ENCODE measurements at regions of chr14 and their contacts with region 1.

Region 1: DNA sequence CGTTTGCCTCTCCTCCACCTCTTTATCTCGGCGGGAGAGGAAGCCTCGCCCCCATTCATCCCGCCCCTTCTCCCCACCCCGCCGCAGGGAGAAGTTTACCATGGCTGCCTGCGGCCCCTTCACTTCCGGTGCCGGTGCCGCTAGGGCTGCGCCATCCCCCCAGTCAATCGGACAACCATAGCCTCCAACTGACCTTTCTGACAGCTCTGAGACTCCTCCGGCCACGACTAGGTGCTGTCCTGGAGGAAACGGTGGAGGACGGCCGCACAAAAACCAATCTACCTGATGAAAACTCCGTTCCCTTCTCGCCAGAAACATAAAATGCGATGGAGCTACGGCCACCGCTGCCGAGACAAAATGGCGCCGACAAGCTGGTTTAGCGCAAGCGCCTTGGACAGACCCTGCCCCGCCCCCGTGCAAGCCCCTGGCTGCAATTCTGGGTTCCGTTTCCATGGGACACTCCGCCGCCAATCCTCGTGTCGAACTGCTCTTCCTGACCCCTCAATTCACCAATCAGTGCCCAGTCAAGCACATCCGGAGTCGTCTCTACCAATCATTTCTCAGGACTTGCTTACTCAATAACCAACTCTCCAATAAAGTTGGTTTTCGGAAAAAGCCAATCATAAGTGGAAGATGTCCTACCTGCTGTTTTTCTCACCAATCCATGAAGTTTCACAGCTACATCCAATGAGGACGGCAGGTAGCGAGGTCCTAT is 436 bp upstream of the ARID4A start:
- DNase-seq: peak; percentile 100
- ATAC-seq: peak; percentile 89
- H3K4me3 ChIP-seq: peak overlapping the region; percentile 83 to 91
- H3K27ac ChIP-seq: peak overlapping the region; percentile 83
- H3K4me1 ChIP-seq: peaks cover 12 to 13% of the 10 kb centered on the region in 2 experiments
- H3K27me3 ChIP-seq: no peaks in the 10 kb centered on the region
- CTCF ChIP-seq: no peak
- POLR2A ChIP-seq: peak; percentile 61
- RAD21 ChIP-seq: no peak

Region 2: GRCh38 chr14:58427281-58428117 is 129.6 kb after region 1 on chr14 and contains the starts of genes KIAA0586 and TIMM9:
- CTCF ChIA-PET with region 1: no interaction called
- POLR2A ChIA-PET with region 1: interaction called, 6 read pairs
- RAD21 ChIA-PET with region 1: no interaction called
- intact Hi-C with region 1: loop called (anchors 1 kb)
- DNase-seq: peak; percentile 98
- ATAC-seq: peak; percentile 88
- H3K4me3 ChIP-seq: peak within 1 kb of the TSS; percentile 88 to 89
- H3K27ac ChIP-seq: peak within 1 kb of the TSS; percentile 86
- H3K4me1 ChIP-seq: peaks cover 3 to 9% of the 10 kb centered on the region in 2 experiments; a peak in 3 of 4 replicates
- H3K27me3 ChIP-seq: no peaks in the 10 kb centered on the region
- CTCF ChIP-seq: no peak
- POLR2A ChIP-seq: peak; percentile 88
- RAD21 ChIP-seq: no peak
- total RNA-seq, gene KIAA0586: 25.7 TPM
- total RNA-seq, gene TIMM9: 40.7 TPM

Region 3: DNA sequence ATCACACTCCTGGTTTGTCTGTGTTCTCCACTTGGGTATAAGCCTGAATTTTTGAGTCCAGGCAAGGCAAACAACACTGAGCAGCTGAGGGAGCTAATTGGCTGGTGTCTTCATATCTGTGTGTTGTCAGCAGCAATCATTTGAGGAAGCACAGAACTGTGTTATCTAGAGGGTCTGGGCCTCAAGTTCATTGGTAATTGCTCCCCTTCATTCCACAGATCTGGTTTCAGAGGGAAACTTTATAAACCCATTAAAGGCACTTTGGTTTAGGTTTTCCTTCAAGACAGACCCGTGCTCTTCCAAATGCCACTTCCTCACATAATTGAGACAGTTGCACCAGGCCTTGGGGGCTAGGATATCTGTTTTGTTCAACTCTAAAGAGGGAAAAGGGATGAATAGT is 345.4 kb after region 1 on chr14:
- CTCF ChIA-PET with region 1: no interaction called
- POLR2A ChIA-PET with region 1: no interaction called
- RAD21 ChIA-PET with region 1: no interaction called
- intact Hi-C with region 1: no loop called
- DNase-seq: no peak
- ATAC-seq: no peak
- H3K4me3 ChIP-seq: no peak overlapping the region
- H3K27ac ChIP-seq: no peak overlapping the region
- H3K4me1 ChIP-seq: peaks cover 7 to 31% of the 10 kb centered on the region in 2 experiments; a peak in 3 of 4 replicates
- H3K27me3 ChIP-seq: no peaks in the 10 kb centered on the region
- CTCF ChIP-seq: no peak
- POLR2A ChIP-seq: no peak
- RAD21 ChIP-seq: no peak

Measured in HCT116 (cell line).